ENCODE measurements at regions of chr4 and their contacts with region 1.

Region 1: GRCh38 chr4:16443504-16444088 is 217.3 kb upstream of the TAPT1 start:
- DNase-seq: no peak
- ATAC-seq: no peak
- H3K4me3 Mint-ChIP-seq: no peak overlapping the region
- H3K27ac Mint-ChIP-seq: no peak overlapping the region
- H3K4me1 Mint-ChIP-seq: no peaks in the 10 kb centered on the region
- H3K27me3 Mint-ChIP-seq: peaks cover 6% of the 10 kb centered on the region
- CTCF ChIP-seq: peak; percentile 48

Region 2: DNA sequence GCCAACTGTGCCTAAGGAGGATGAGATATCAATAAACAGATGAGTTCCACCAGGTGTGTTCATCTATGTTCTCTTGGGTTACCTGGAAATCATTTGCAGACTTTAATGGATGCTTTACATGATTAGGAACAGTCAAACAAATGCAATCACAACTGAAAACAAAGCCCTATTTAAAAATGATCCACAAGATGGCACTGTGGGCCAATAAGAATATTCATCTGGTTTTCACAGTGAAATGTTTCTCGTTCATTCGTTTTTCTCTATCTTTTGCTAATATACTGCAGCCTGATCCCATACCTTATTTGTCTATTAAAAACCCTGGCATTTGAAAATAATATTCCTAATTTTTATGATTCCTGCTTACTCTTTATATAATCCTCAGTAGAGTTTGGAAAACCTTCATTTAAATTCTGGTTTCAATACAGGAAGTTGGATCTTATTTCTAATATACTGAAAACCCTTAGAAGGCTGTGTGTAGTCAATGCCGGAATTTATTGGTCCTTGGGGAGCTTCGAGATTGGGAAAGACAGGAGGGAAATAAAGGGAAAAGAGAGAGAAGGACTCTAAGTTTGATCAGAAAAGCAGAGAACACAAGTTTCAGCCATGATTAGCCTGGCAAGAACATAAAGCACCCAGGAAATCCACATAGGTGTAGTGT is 153.6 kb before region 1 on chr4:
- CTCF ChIA-PET with region 1: interaction called, 20 read pairs
- POLR2A ChIA-PET with region 1: no interaction called
- intact Hi-C with region 1: loop called (anchors 2 kb)
- DNase-seq: no peak
- ATAC-seq: no peak
- H3K4me3 Mint-ChIP-seq: no peak overlapping the region
- H3K27ac Mint-ChIP-seq: no peak overlapping the region
- H3K4me1 Mint-ChIP-seq: peaks cover 5% of the 10 kb centered on the region
- H3K27me3 Mint-ChIP-seq: peaks cover 12% of the 10 kb centered on the region
- CTCF ChIP-seq: peak; percentile 75

Region 3: GRCh38 chr4:16707874-16708273 is 264.3 kb after region 1 on chr4:
- CTCF ChIA-PET with region 1: no interaction called
- POLR2A ChIA-PET with region 1: no interaction called
- intact Hi-C with region 1: no loop called
- DNase-seq: no peak
- ATAC-seq: no peak
- H3K4me3 Mint-ChIP-seq: no peak overlapping the region
- H3K27ac Mint-ChIP-seq: no peak overlapping the region
- H3K4me1 Mint-ChIP-seq: no peaks in the 10 kb centered on the region
- H3K27me3 Mint-ChIP-seq: peaks cover 10% of the 10 kb centered on the region
- CTCF ChIP-seq: no peak